PC-9 (cell line): ENCODE measurements at regions of chr6 and their contacts with region 1.

Region 1: GRCh38 chr6:21225912-21226311 is 367.6 kb upstream of the SOX4 start:
- DNase-seq: no peak
- H3K4me3 ChIP-seq: no peak overlapping the region
- H3K27ac ChIP-seq: no peak overlapping the region
- H3K4me1 ChIP-seq: peaks cover 5% of the 10 kb centered on the region
- H3K27me3 ChIP-seq: no peaks in the 10 kb centered on the region
- CTCF ChIP-seq: no peak

Region 2: GRCh38 chr6:20680697-20681165 is 545.2 kb before region 1 on chr6:
- CTCF ChIA-PET with region 1: no interaction called
- POLR2A ChIA-PET with region 1: no interaction called
- intact Hi-C with region 1: no loop called
- DNase-seq: no peak
- H3K4me3 ChIP-seq: no peak overlapping the region
- H3K27ac ChIP-seq: no peak overlapping the region
- H3K4me1 ChIP-seq: no peaks in the 10 kb centered on the region
- H3K27me3 ChIP-seq: no peaks in the 10 kb centered on the region
- CTCF ChIP-seq: no peak

Region 3: DNA sequence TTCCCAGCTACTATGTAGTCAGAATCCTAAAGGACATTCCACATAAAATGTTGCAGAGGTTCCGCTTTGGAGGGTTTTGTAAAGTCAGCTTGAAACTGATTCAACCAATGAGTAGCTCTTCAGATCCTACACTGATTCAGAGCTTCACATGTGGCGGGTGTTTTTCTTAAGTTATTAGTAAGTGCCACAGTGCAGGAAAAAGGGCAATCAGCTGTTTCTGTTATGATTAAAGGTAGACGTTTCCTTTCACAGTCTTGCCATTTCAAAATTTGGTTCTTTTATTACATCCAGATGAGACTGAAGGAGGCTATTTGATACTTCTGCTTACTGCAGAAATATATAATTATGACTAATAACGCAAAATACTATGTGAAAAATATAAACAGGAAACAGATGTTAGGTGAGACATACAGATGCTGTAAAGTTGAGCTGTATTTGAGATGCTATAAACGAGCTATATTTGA is 247.7 kb before region 1 on chr6:
- CTCF ChIA-PET with region 1: no interaction called
- POLR2A ChIA-PET with region 1: no interaction called
- intact Hi-C with region 1: no loop called
- DNase-seq: no peak
- H3K4me3 ChIP-seq: no peak overlapping the region
- H3K27ac ChIP-seq: no peak overlapping the region
- H3K4me1 ChIP-seq: no peaks in the 10 kb centered on the region
- H3K27me3 ChIP-seq: no peaks in the 10 kb centered on the region
- CTCF ChIP-seq: no peak

Region 4: DNA sequence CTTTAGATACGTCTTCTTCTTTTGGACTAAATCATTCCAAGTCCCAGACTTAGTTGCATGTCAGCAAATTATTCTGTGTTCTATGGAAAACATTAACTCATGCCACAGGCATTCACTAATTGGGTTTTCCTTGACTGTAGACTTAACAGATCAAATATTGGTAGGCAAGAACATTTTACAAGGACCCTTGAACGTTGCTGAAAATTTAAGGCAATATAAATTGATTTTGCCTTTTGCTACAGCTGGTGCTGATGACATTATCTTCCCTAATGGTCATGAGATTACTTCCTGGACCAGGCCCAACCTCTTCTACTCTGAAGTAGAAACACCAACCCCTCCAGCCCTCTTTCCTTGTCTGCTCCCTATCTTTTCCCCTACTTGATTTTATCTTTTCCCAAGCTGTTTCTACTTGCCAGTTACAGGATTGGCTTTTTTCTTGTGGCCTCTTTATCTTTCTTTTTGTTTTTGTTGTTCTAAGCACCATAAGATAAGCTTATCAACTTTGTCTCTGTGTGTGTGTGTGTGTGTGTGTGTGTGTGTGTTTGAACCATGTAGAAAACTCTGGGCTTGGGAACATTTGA is 146.4 kb before region 1 on chr6:
- CTCF ChIA-PET with region 1: no interaction called
- POLR2A ChIA-PET with region 1: no interaction called
- intact Hi-C with region 1: no loop called
- DNase-seq: no peak
- H3K4me3 ChIP-seq: no peak overlapping the region
- H3K27ac ChIP-seq: no peak overlapping the region
- H3K4me1 ChIP-seq: no peaks in the 10 kb centered on the region
- H3K27me3 ChIP-seq: no peaks in the 10 kb centered on the region
- CTCF ChIP-seq: no peak

Region 5: GRCh38 chr6:21245488-21245887 is 19.6 kb after region 1 on chr6:
- CTCF ChIA-PET with region 1: no interaction called
- POLR2A ChIA-PET with region 1: interaction called, 10 read pairs
- intact Hi-C with region 1: no loop called
- DNase-seq: no peak
- H3K4me3 ChIP-seq: no peak overlapping the region
- H3K27ac ChIP-seq: no peak overlapping the region
- H3K4me1 ChIP-seq: no peaks in the 10 kb centered on the region
- H3K27me3 ChIP-seq: no peaks in the 10 kb centered on the region
- CTCF ChIP-seq: no peak